PC-3 (cell line): ENCODE measurements at regions of chr19 and their contacts with region 1.

Region 1: GRCh38 chr19:28878862-28879566 is 333.9 kb downstream of the UQCRFS1 start:
- DNase-seq: peak; percentile 62
- ATAC-seq: peak; percentile 29; the same call in 1 of the 2 replicates
- H3K4me3 ChIP-seq: no peak overlapping the region
- H3K27ac ChIP-seq: no peak overlapping the region
- H3K4me1 ChIP-seq: no peaks in the 10 kb centered on the region
- H3K27me3 ChIP-seq: 0 out of 2 replicates have a peak, but pooled peaks cover 6% of the 10 kb centered on the region
- CTCF ChIP-seq: peak; percentile 63

Region 2: DNA sequence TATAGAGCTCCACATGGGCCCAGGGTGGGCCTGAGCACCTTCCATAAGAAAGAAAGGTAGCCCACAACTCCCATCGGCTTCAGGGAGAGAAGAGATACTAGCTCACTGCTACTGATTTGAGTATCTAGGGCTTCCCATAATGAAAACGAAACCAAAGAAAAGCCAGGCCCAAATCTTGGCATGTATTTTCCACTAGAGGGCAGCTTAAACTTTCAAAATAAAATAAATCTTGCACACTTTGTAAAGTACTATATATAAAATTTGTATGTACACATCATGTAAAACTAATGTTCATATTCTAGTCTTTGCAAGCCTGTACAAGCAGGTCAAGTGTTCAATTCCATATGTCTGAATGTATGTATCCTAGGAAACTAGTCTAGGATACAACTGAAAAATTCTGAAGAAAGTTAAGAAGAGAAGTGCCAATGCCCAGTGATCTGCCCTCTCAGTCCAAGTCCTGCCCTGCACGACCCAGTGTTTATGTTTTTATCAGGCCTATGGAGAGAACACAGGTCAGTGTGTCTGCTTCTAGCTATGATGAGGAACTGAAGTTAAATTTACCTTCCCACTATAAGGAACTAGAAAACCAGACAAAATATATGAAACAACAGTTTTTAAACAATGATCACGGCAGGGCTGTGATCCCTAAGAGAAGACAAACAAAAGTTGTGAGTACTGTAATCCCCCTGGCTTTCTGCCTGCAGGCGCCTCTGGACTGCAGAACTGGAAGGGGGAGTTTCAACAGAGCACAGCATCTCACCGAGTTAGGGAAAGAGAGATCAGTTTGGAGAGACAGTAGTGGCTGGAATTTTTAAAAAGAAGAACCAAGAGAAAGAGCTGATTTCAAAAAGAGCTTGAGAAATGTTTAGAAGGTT is 141.8 kb before region 1 on chr19:
- CTCF ChIA-PET with region 1: interaction called, 11 read pairs
- POLR2A ChIA-PET with region 1: no interaction called
- intact Hi-C with region 1: no loop called
- DNase-seq: peak; percentile 35
- ATAC-seq: no peak
- H3K4me3 ChIP-seq: no peak overlapping the region
- H3K27ac ChIP-seq: no peak overlapping the region
- H3K4me1 ChIP-seq: no peaks in the 10 kb centered on the region
- H3K27me3 ChIP-seq: no peaks in the 10 kb centered on the region
- CTCF ChIP-seq: peak; percentile 49

Region 3: DNA sequence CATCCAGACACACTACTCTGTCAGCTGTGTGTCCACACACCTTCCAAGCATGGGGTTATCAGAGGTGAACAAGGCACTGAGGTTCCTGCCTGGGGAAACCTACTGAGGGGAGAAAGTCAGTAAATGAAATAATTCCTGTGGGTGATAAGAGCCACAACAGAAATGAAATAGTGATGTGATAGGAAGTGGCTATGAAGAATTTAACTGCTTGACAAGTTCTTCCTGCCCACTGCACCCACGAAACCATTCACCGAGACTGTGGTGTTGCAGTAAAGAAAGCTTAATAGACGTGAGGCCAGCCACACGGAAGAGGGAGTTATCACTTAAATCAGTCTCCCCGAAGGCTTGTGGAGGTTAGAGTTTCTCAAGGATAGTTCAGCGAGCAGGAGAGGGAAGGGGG is 19.2 kb before region 1 on chr19:
- CTCF ChIA-PET with region 1: no interaction called
- POLR2A ChIA-PET with region 1: no interaction called
- intact Hi-C with region 1: no loop called
- DNase-seq: no peak
- ATAC-seq: no peak
- H3K4me3 ChIP-seq: no peak overlapping the region
- H3K27ac ChIP-seq: no peak overlapping the region
- H3K4me1 ChIP-seq: no peaks in the 10 kb centered on the region
- H3K27me3 ChIP-seq: no peaks in the 10 kb centered on the region
- CTCF ChIP-seq: no peak